Activated CD8-positive, alpha-beta T cell treated with anti-CD3 and anti-CD28 coated beads for 36 hours (primary cell): ENCODE measurements at regions of chrX and their contacts with region 1.

Region 1: GRCh38 chrX:72018277-72019112 is 107.8 kb downstream of the NHSL2 start:
- DNase-seq: peak; percentile 85
- ATAC-seq: peak; percentile 92
- H3K4me3 Mint-ChIP-seq: no peak overlapping the region
- H3K27ac Mint-ChIP-seq: no peak overlapping the region
- H3K4me1 Mint-ChIP-seq: peaks cover 27% of the 10 kb centered on the region
- H3K27me3 Mint-ChIP-seq: peaks cover 18% of the 10 kb centered on the region
- CTCF ChIP-seq: peak; percentile 68

Region 2: DNA sequence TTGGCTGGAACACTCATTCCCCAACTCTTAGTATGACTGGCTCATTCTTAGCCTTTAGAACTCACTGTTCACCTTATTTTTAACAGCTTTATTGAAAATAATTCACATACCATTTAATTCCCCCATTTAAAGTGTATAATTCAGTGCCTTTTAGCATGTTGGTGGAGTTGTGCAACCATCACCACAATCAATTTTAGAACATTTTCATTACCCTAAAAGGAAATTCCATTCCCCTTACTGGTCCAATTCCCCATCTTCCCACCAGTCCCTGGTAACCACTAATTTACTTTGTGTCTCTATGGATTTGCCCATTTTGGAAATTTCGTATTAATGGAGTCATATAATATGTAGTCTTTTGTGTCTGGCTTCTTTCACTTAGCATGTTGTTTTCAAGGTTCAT is 88.2 kb before region 1 on chrX:
- CTCF ChIA-PET with region 1: no interaction called
- POLR2A ChIA-PET with region 1: no interaction called
- intact Hi-C with region 1: no loop called
- DNase-seq: no peak
- ATAC-seq: no peak
- H3K4me3 Mint-ChIP-seq: no peak overlapping the region
- H3K27ac Mint-ChIP-seq: no peak overlapping the region
- H3K4me1 Mint-ChIP-seq: no peaks in the 10 kb centered on the region
- H3K27me3 Mint-ChIP-seq: peaks cover 4% of the 10 kb centered on the region
- CTCF ChIP-seq: no peak

Region 3: DNA sequence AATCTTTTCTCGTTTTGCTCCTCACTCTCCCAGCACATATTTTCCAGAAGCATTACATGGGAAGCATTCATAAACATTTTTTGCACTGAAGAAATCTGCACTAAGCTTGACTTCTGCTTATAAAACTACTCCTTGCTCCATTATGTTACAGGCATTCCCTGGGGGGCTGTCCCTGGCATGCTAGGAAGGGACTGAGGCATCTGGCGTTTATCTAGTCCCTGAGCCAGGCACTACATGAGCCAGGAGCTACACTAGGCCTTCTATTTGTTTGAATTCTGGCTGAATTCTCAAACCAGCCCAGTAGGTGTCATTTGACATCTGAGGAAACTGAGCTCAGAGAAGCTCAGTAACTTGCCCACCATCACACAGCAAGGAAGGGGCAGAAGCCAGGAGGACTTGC is 64.5 kb before region 1 on chrX:
- CTCF ChIA-PET with region 1: no interaction called
- POLR2A ChIA-PET with region 1: no interaction called
- intact Hi-C with region 1: no loop called
- DNase-seq: no peak
- ATAC-seq: no peak
- H3K4me3 Mint-ChIP-seq: no peak overlapping the region
- H3K27ac Mint-ChIP-seq: no peak overlapping the region
- H3K4me1 Mint-ChIP-seq: no peaks in the 10 kb centered on the region
- H3K27me3 Mint-ChIP-seq: no peaks in the 10 kb centered on the region
- CTCF ChIP-seq: no peak

Region 4: DNA sequence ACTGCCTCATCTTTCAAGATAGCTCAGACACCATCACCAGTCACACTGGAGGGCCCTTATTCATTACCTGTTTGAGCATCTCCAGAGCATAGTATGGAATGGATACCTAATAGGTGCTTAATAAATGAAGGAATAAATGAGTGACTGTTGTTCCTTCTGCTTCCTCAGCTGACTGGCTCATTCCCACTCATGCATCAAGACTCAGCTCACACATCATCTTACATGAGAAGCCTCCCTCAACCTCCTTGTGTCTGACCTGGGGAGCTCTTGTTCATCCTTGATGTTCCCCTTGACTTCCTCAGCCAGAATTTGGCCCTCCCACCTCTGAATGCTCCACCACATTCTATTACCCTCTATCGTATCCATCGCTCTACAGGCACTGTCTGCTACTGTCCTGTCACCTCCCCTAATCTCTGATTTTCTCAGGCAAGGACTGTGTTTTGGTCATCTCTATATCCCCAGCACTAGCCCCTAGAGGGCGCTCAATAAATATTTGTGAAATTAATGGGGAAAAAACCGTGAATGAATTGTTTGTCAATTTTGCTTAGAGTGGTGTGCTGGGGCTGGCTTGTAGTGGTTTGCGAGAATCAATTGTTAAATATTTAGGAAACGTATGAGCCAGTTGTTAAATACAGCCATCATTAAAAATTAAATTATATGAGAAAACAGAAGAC is 19.5 kb before region 1 on chrX:
- CTCF ChIA-PET with region 1: interaction called, 15 read pairs
- POLR2A ChIA-PET with region 1: interaction called, 3 read pairs
- intact Hi-C with region 1: no loop called
- DNase-seq: peak; percentile 51
- ATAC-seq: peak; percentile 49
- H3K4me3 Mint-ChIP-seq: no peak overlapping the region
- H3K27ac Mint-ChIP-seq: no peak overlapping the region
- H3K4me1 Mint-ChIP-seq: no peaks in the 10 kb centered on the region
- H3K27me3 Mint-ChIP-seq: peaks cover 3% of the 10 kb centered on the region
- CTCF ChIP-seq: peak; percentile 52

Region 5: GRCh38 chrX:72029483-72030411 is 11.3 kb after region 1 on chrX:
- CTCF ChIA-PET with region 1: interaction called, 40 read pairs
- POLR2A ChIA-PET with region 1: no interaction called
- intact Hi-C with region 1: no loop called
- DNase-seq: no peak
- ATAC-seq: no peak
- H3K4me3 Mint-ChIP-seq: no peak overlapping the region
- H3K27ac Mint-ChIP-seq: no peak overlapping the region
- H3K4me1 Mint-ChIP-seq: peaks cover 7% of the 10 kb centered on the region
- H3K27me3 Mint-ChIP-seq: peaks cover 3% of the 10 kb centered on the region
- CTCF ChIP-seq: no peak

Region 6: DNA sequence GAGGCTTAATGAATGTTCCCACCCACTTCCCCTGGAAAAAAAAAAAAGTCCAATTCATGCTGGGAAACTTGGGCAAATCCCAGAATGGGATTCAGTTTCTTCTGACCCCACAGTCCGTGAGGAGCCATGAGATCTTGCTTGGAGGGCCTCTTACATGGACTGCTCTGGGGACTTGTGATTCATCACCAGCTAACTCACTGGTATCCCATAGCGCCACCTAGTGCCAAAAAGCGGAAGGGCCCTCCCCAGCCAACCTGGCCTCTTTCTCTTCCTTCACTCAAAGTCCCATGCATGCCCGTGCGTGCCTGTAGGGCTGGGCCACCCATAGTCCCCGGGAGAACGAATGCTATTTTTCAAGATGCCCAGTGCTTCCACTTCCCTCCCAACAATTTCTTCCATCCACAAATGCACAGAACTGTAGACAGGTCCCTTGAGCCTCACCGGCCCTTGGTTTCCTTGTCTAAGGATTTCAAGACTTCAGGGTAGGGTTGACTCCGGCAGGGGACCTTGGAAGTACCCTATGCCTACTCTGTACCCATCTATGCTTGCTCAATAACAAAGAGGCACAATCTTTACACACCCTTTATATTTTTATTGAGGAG is 108.1 kb after region 1 on chrX:
- CTCF ChIA-PET with region 1: interaction called, 39 read pairs
- POLR2A ChIA-PET with region 1: interaction called, 3 read pairs
- intact Hi-C with region 1: loop called (anchors 5 kb)
- DNase-seq: peak; percentile 90
- ATAC-seq: peak; percentile 81
- H3K4me3 Mint-ChIP-seq: no peak overlapping the region
- H3K27ac Mint-ChIP-seq: no peak overlapping the region
- H3K4me1 Mint-ChIP-seq: peaks cover 15% of the 10 kb centered on the region
- H3K27me3 Mint-ChIP-seq: peaks cover 29% of the 10 kb centered on the region
- CTCF ChIP-seq: peak; percentile 62